A549 (cell line): ENCODE measurements at regions of chr10 and their contacts with region 1.

Region 1: DNA sequence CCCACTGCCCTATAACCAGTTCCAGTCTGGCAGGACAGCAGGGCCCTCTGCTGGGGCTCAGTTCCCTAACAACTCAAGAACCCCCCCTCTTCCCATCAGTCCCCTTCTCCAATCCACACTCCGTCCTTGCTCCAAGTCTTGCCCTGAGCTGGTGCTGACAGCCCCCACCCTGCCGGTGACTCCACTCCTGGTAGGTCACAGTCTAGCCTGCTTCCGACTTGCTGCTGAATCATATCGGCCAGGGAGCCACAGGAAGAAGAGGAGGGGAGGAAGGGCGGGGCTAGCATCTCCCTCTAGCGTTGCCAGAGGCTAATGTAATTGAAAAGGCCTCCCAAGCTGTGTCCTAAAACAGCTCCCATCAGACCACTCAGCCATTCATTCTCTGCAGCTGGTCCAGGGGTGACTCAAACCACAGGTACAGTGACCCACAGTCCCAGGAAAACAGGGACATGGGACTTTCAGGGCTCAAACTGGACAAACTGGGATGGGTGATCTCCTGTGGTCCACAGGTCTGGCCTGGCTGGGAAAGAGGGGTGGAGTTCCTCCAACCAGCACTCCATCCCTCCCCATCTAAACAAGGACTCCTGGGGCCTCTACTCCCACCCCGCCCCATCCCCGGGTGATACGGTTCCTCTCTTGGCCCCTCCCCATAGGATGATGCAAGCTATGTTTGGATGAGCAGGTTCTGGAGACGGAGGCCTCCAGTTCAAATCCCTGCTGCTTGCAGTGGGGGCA is 158.8 kb downstream of the SH3PXD2A start:
- DNase-seq: peak; percentile 91 to 95
- ATAC-seq: peak; percentile 82 to 90
- H3K4me3 ChIP-seq: 0 out of 3 replicates have a peak overlapping the region, but pooled peaks have one; percentile 7
- H3K27ac ChIP-seq: peak overlapping the region; percentile 90 to 91
- H3K4me1 ChIP-seq: peaks cover 61% of the 10 kb centered on the region
- CTCF ChIP-seq: peak; percentile 34
- EP300 ChIP-seq: no peak
- POLR2A ChIP-seq: no peak
- RAD21 ChIP-seq: peak; percentile 15 to 18; a peak in 1 of 5 replicates

Region 2: GRCh38 chr10:103504181-103504783 is 192.3 kb before region 1 on chr10:
- CTCF ChIA-PET with region 1: no interaction called
- POLR2A ChIA-PET with region 1: no interaction called
- DNase-seq: peak; percentile 77 to 85
- ATAC-seq: peak; percentile 71 to 81; a peak in 5 of 6 replicates
- H3K4me3 ChIP-seq: no peak overlapping the region
- H3K27ac ChIP-seq: peak overlapping the region; percentile 45 to 60; a peak in 3 of 6 replicates
- H3K4me1 ChIP-seq: peaks cover 12% of the 10 kb centered on the region
- CTCF ChIP-seq: no peak
- EP300 ChIP-seq: no peak
- POLR2A ChIP-seq: no peak
- RAD21 ChIP-seq: no peak

Region 3: GRCh38 chr10:103645141-103646054 is 51.2 kb before region 1 on chr10:
- CTCF ChIA-PET with region 1: no interaction called
- POLR2A ChIA-PET with region 1: no interaction called
- DNase-seq: no peak
- ATAC-seq: no peak
- H3K4me3 ChIP-seq: no peak overlapping the region
- H3K27ac ChIP-seq: no peak overlapping the region
- H3K4me1 ChIP-seq: no peaks in the 10 kb centered on the region
- CTCF ChIP-seq: no peak
- EP300 ChIP-seq: no peak
- POLR2A ChIP-seq: no peak
- RAD21 ChIP-seq: no peak

Region 4: DNA sequence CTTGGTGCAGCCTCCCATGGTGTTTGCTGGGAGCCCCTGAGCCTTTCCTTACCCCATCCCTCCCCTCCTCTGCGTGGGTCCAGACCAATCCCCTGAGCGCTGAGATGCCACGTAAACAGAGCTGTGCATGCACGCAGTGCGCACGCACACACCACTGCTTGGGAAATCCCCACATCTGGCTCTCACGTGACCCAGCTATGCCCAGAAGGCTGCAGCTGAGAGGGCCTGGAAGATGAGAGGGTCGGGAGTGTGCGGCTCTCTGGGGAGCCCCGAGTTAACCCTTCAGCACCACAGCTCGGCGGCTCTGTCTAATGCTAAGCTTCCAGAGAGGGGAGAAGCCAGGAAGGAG is 18.4 kb before region 1 on chr10:
- CTCF ChIA-PET with region 1: interaction called, 10 read pairs
- POLR2A ChIA-PET with region 1: no interaction called
- DNase-seq: no peak
- ATAC-seq: no peak
- H3K4me3 ChIP-seq: no peak overlapping the region
- H3K27ac ChIP-seq: no peak overlapping the region; a peak in 1 of 6 replicates
- H3K4me1 ChIP-seq: peaks cover 21% of the 10 kb centered on the region
- CTCF ChIP-seq: no peak
- EP300 ChIP-seq: no peak
- POLR2A ChIP-seq: no peak
- RAD21 ChIP-seq: no peak